Activated CD4-positive, alpha-beta memory T cell treated with anti-CD3 and anti-CD28 coated beads for 36 hours (primary cell): ENCODE measurements at regions of chr6 and their contacts with region 1.

Region 1: DNA sequence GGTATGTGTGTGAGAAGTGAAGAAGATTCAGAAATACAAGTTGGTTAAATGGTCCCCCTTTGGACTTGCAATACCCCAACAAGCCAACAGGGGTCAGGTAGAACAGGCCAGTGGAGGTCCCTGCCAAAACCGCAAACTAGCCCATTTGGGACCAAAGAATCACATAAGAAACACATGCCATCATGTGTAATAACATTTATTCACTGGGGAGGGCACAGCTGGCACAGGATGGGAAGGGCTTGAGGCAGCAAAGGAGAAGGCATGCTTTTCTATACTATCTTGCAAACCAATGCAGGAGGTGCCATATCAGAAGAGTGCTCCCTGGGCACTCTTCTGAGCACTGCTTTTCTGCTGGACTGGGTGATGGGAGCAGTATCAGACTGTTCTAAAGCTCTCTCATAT is 116.1 kb upstream of the TRAF3IP2 start:
- DNase-seq: peak; percentile 63
- H3K4me3 Mint-ChIP-seq: no peak overlapping the region
- H3K27ac Mint-ChIP-seq: peak overlapping the region; percentile 65
- H3K4me1 Mint-ChIP-seq: peaks cover 91% of the 10 kb centered on the region
- H3K27me3 Mint-ChIP-seq: no peaks in the 10 kb centered on the region

Region 2: GRCh38 chr6:111750753-111751684 is 29.3 kb after region 1 on chr6:
- CTCF ChIA-PET with region 1: interaction called, 8 read pairs
- POLR2A ChIA-PET with region 1: interaction called, 4 read pairs
- intact Hi-C with region 1: loop called (anchors 1 kb)
- DNase-seq: peak; percentile 71
- H3K4me3 Mint-ChIP-seq: peak overlapping the region; percentile 59
- H3K27ac Mint-ChIP-seq: peak overlapping the region; percentile 95
- H3K4me1 Mint-ChIP-seq: peaks cover 93% of the 10 kb centered on the region
- H3K27me3 Mint-ChIP-seq: no peaks in the 10 kb centered on the region